BJ (cell line): ENCODE measurements at regions of chr3 and their contacts with region 1.

Region 1: GRCh38 chr3:65984975-65985374 is 53.7 kb downstream of the MAGI1 start:
- DNase-seq: no peak
- H3K4me3 ChIP-seq: no peak overlapping the region
- H3K27me3 ChIP-seq: no peaks in the 10 kb centered on the region
- CTCF ChIP-seq: no peak

Region 2: GRCh38 chr3:65783117-65783516 is 201.9 kb before region 1 on chr3:
- CTCF ChIA-PET with region 1: no interaction called
- POLR2A ChIA-PET with region 1: interaction called, 12 read pairs
- DNase-seq: no peak
- H3K4me3 ChIP-seq: no peak overlapping the region
- H3K27me3 ChIP-seq: no peaks in the 10 kb centered on the region
- CTCF ChIP-seq: no peak